Caco-2 (cell line): ENCODE measurements at regions of chr11 and their contacts with region 1.

Region 1: GRCh38 chr11:19076744-19077589 is 16.4 kb upstream of the MRGPRX2 start:
- DNase-seq: peak; percentile 52 to 78
- H3K4me3 ChIP-seq: no peak overlapping the region
- H3K4me3 Mint-ChIP-seq: no peak overlapping the region
- H3K27ac Mint-ChIP-seq: no peak overlapping the region
- H3K4me1 ChIP-seq: no peaks in the 10 kb centered on the region; the same call in 1 of the 2 replicates
- H3K4me1 Mint-ChIP-seq: peaks cover 14% of the 10 kb centered on the region
- H3K27me3 ChIP-seq: no peaks in the 10 kb centered on the region
- H3K27me3 Mint-ChIP-seq: no peaks in the 10 kb centered on the region
- CTCF ChIP-seq: peak; percentile 97 to 98

Region 2: GRCh38 chr11:19116971-19117750 is 40.2 kb after region 1 on chr11 and contains the start of gene ZDHHC13:
- CTCF ChIA-PET with region 1: interaction called, 6 read pairs
- POLR2A ChIA-PET with region 1: no interaction called
- intact Hi-C with region 1: loop called (anchors 1 kb)
- DNase-seq: peak; percentile 98 to 99
- H3K4me3 ChIP-seq: peak within 1 kb of the TSS; percentile 83
- H3K4me3 Mint-ChIP-seq: peak within 1 kb of the TSS; percentile 92
- H3K27ac Mint-ChIP-seq: peak within 1 kb of the TSS; percentile 84
- H3K4me1 ChIP-seq: 0 out of 2 replicates have a peak, but pooled peaks cover 4% of the 10 kb centered on the region
- H3K4me1 Mint-ChIP-seq: peaks cover 13% of the 10 kb centered on the region
- H3K27me3 ChIP-seq: no peaks in the 10 kb centered on the region
- H3K27me3 Mint-ChIP-seq: no peaks in the 10 kb centered on the region
- CTCF ChIP-seq: peak; percentile 12 to 63
- total RNA-seq, gene ZDHHC13: 21.4 and 21.8 TPM in 2 replicates